Activated CD4-positive, alpha-beta T cell treated with anti-CD3 and anti-CD28 coated beads for 36 hours (primary cell): ENCODE measurements at regions of chr1 and their contacts with region 1.

Region 1: DNA sequence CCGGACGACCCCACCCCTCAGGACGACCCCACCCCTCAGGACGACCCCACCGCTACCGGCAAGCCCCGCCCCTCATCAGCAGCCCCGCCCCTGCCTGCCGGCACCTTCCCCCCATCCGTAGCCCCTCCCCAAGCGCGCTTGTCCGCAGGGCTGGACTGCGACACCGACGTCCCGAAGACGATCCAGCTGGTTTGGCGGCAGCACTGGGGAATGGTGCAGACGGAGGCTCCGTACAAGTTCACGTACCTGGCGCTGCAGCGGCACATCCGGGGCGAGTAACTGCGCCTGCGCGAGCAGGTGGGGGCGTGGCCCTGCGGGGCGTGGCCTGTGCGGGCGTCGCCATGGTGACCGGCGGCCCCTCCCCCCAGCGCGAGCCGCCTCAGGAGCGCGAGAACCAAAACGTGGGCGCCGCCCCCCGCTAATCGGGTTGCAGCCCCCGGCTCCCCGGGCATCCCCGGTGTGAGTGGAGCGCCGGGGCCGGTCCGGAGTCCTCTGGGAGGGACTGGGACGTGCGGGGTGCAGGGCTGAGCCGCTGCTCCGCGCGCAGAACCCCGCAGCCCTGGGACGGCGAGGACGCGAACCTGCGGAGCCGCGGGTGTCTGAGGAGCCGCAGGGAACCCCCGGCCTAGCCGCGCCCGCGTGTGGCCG is 4.9 kb downstream of the RNF223 start:
- DNase-seq: peak; percentile 94
- ATAC-seq: peak; percentile 47
- H3K4me3 Mint-ChIP-seq: peak overlapping the region; percentile 71
- H3K27ac Mint-ChIP-seq: no peak overlapping the region
- H3K4me1 Mint-ChIP-seq: peaks cover 11% of the 10 kb centered on the region
- H3K27me3 Mint-ChIP-seq: no peaks in the 10 kb centered on the region

Region 2: GRCh38 chr1:941588-942383 is 127.4 kb before region 1 on chr1:
- CTCF ChIA-PET with region 1: no interaction called
- POLR2A ChIA-PET with region 1: no interaction called
- intact Hi-C with region 1: no loop called
- DNase-seq: peak; percentile 56
- ATAC-seq: peak; percentile 37
- H3K4me3 Mint-ChIP-seq: no peak overlapping the region
- H3K27ac Mint-ChIP-seq: no peak overlapping the region
- H3K4me1 Mint-ChIP-seq: peaks cover 5% of the 10 kb centered on the region
- H3K27me3 Mint-ChIP-seq: peaks cover 14% of the 10 kb centered on the region

Region 3: GRCh38 chr1:1040004-1040991 is 28.9 kb before region 1 on chr1:
- CTCF ChIA-PET with region 1: interaction called, 7 read pairs
- POLR2A ChIA-PET with region 1: no interaction called
- intact Hi-C with region 1: loop called in 1 of 2 experiments (anchors 1 kb)
- DNase-seq: peak; percentile 93
- ATAC-seq: peak; percentile 87
- H3K4me3 Mint-ChIP-seq: peak overlapping the region; percentile 35
- H3K27ac Mint-ChIP-seq: no peak overlapping the region
- H3K4me1 Mint-ChIP-seq: peaks cover 15% of the 10 kb centered on the region
- H3K27me3 Mint-ChIP-seq: peaks cover 22% of the 10 kb centered on the region